MCF 10A (cell line): ENCODE measurements at regions of chr1 and their contacts with region 1.

Region 1: DNA sequence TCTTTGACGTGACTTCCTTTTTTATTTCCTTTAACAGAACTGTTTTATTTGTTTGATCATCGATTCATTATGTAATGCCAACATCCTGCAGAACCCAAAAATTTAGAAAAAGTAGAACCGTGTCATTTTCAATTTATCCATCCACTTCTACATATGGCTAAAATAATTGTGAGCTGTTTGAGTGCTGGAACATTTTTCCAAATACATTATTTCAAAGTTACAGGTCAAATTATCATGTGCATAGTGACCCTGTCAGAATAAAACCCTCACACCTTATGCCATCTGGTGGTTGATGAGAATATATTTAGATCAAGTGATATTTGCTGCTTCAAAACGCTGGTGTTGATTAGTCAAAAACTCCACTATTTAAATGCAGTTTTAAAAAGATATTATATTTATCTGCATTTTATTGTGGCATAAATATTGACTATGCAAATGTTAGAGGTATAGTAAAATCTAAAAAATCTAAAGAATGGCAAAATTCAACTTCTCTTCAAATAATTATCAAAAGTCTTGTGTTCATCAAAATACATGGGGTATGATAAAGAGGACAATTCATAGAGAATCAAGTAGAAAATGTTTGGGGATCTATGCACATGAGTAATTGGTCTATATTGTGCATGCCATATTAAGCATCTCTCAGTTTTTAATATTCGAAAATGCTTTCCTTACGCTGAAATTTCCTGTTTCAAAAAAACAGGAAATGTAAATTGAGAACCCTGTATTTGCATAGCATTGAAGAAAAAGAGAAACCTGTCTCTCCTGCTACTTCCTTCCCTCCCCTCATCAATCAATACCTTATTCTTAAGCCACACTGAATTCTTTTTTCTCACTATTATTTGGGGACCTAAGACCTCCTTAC is 39.7 kb downstream of the UBE2U start:
- DNase-seq: peak; percentile 57
- H3K4me3 Mint-ChIP-seq: no peak overlapping the region
- H3K27ac Mint-ChIP-seq: no peak overlapping the region
- H3K4me1 Mint-ChIP-seq: no peaks in the 10 kb centered on the region
- H3K27me3 Mint-ChIP-seq: no peaks in the 10 kb centered on the region
- CTCF ChIP-seq: peak; percentile 38

Region 2: DNA sequence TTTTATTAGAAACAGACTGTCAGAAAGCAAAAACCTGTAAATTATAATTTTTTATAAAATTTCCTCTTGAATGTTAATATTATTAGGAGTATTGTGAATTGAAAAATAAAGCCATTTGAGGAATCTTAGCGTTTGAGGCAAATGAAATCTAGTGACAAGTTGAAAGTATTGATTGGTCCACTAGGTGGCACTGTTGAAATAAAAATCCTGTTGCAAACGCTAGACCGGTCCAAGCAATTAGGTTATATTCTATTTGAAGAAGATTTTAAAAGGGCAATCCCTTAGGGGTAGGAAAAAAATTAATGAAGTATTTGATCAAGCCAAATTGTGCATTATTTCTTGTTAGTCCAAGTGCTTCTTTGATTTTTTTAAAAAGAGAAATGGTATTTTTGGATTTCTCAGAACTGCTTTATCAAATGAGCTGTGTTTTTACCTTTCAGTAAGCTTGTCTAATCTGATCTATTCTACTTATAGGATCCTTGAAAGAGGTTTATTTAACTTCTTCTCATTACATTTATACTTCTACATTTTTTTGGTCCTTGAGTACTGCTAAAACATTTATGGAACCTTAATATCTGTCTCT is 1401.4 kb before region 1 on chr1:
- CTCF ChIA-PET with region 1: no interaction called
- POLR2A ChIA-PET with region 1: no interaction called
- intact Hi-C with region 1: loop called (anchors 5 kb)
- DNase-seq: peak; percentile 69
- H3K4me3 Mint-ChIP-seq: no peak overlapping the region
- H3K27ac Mint-ChIP-seq: no peak overlapping the region
- H3K4me1 Mint-ChIP-seq: no peaks in the 10 kb centered on the region
- H3K27me3 Mint-ChIP-seq: no peaks in the 10 kb centered on the region
- CTCF ChIP-seq: peak; percentile 47

Region 3: GRCh38 chr1:63575340-63575826 is 667.7 kb before region 1 on chr1:
- CTCF ChIA-PET with region 1: interaction called, 26 read pairs
- POLR2A ChIA-PET with region 1: interaction called, 3 read pairs
- intact Hi-C with region 1: loop called (anchors 1 kb)
- DNase-seq: peak; percentile 66
- H3K4me3 Mint-ChIP-seq: no peak overlapping the region
- H3K27ac Mint-ChIP-seq: no peak overlapping the region
- H3K4me1 Mint-ChIP-seq: peaks cover 7% of the 10 kb centered on the region
- H3K27me3 Mint-ChIP-seq: no peaks in the 10 kb centered on the region
- CTCF ChIP-seq: peak; percentile 40

Region 4: GRCh38 chr1:63662056-63662836 is 580.9 kb before region 1 on chr1:
- CTCF ChIA-PET with region 1: interaction called, 15 read pairs
- POLR2A ChIA-PET with region 1: interaction called, 3 read pairs
- intact Hi-C with region 1: no loop called
- DNase-seq: peak; percentile 97
- H3K4me3 Mint-ChIP-seq: peak overlapping the region; percentile 58
- H3K27ac Mint-ChIP-seq: peak overlapping the region; percentile 97
- H3K4me1 Mint-ChIP-seq: peaks cover 39% of the 10 kb centered on the region
- H3K27me3 Mint-ChIP-seq: no peaks in the 10 kb centered on the region
- CTCF ChIP-seq: no peak

Region 5: GRCh38 chr1:63691701-63692425 is 551.3 kb before region 1 on chr1:
- CTCF ChIA-PET with region 1: interaction called, 38 read pairs
- POLR2A ChIA-PET with region 1: interaction called, 4 read pairs
- intact Hi-C with region 1: loop called (anchors 1 kb)
- DNase-seq: peak; percentile 88
- H3K4me3 Mint-ChIP-seq: no peak overlapping the region
- H3K27ac Mint-ChIP-seq: peak overlapping the region; percentile 28
- H3K4me1 Mint-ChIP-seq: peaks cover 17% of the 10 kb centered on the region
- H3K27me3 Mint-ChIP-seq: no peaks in the 10 kb centered on the region
- CTCF ChIP-seq: peak; percentile 63

Region 6: DNA sequence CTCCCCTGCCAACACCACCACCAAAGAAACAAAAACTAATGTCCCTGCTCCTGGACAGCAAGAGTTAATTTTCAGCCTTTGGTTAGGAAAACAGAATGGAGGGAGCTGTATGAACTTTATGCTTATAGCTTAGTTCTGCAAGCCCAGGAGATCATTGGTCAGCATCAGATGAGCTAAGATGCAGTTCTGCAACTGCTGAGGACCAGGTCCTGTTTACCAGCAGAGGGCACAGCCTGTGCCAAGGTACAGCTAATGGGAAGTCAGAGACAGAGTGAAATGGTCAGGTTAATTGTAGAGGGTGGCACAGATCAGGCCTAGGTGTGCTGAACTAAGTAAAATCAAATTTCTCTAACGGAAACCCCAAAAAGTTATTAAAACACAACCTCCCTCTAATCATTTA is 308.0 kb before region 1 on chr1:
- CTCF ChIA-PET with region 1: no interaction called
- POLR2A ChIA-PET with region 1: interaction called, 3 read pairs
- intact Hi-C with region 1: loop called (anchors 5 kb)
- DNase-seq: peak; percentile 53
- H3K4me3 Mint-ChIP-seq: no peak overlapping the region
- H3K27ac Mint-ChIP-seq: no peak overlapping the region
- H3K4me1 Mint-ChIP-seq: peaks cover 6% of the 10 kb centered on the region
- H3K27me3 Mint-ChIP-seq: no peaks in the 10 kb centered on the region
- CTCF ChIP-seq: peak; percentile 36